ENCODE measurements at regions of chr10 and their contacts with region 1.

Region 1: GRCh38 chr10:120850911-120851865 is at the start of gene WDR11:
- H3K4me3 Mint-ChIP-seq: peak within 1 kb of the TSS; percentile 88
- H3K27ac Mint-ChIP-seq: peak within 1 kb of the TSS; percentile 92
- H3K4me1 Mint-ChIP-seq: peaks cover 47% of the 10 kb centered on the region
- H3K27me3 Mint-ChIP-seq: no peaks in the 10 kb centered on the region

Region 2: GRCh38 chr10:120480065-120480600 is 371.1 kb before region 1 on chr10:
- intact Hi-C with region 1: no loop called
- H3K4me3 Mint-ChIP-seq: no peak overlapping the region
- H3K27ac Mint-ChIP-seq: no peak overlapping the region
- H3K4me1 Mint-ChIP-seq: no peaks in the 10 kb centered on the region
- H3K27me3 Mint-ChIP-seq: no peaks in the 10 kb centered on the region

Region 3: GRCh38 chr10:120825878-120826769 is 25.1 kb before region 1 on chr10:
- intact Hi-C with region 1: loop called (anchors 1 kb)
- H3K4me3 Mint-ChIP-seq: no peak overlapping the region
- H3K27ac Mint-ChIP-seq: peak overlapping the region; percentile 47
- H3K4me1 Mint-ChIP-seq: peaks cover 29% of the 10 kb centered on the region
- H3K27me3 Mint-ChIP-seq: peaks cover 3% of the 10 kb centered on the region

Region 4: DNA sequence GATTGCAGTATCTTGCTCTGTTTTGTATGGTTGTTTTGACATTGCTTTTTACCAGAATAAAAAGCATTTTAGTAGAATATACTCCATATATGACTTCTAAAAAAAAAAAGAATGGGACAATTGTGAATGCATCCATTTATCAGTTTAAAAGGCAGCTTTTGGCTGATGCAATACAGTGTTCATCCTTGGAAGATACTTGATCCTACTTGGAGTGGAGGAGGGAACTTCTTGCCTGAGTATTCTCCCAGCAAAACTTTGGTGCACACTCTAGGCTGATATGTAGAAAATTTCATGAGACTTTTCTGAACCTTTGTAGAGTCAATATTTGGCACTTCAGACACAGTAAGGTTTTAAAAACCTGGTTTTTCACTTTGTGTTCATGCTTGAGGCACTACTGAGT is 40.2 kb after region 1 on chr10:
- intact Hi-C with region 1: no loop called
- H3K4me3 Mint-ChIP-seq: no peak overlapping the region
- H3K27ac Mint-ChIP-seq: no peak overlapping the region
- H3K4me1 Mint-ChIP-seq: peaks cover 7% of the 10 kb centered on the region
- H3K27me3 Mint-ChIP-seq: no peaks in the 10 kb centered on the region